GM12878 (cell line): ENCODE measurements at regions of chr7 and their contacts with region 1.

Region 1: GRCh38 chr7:109179601-109180000 is 609.9 kb downstream of the DNAJB9 start:
- DNase-seq: no peak
- ATAC-seq: no peak
- H3K4me3 ChIP-seq: no peak overlapping the region
- H3K27ac ChIP-seq: no peak overlapping the region
- H3K4me1 ChIP-seq: no peaks in the 10 kb centered on the region
- H3K27me3 ChIP-seq: no peaks in the 10 kb centered on the region
- CTCF ChIP-seq: no peak
- EP300 ChIP-seq: no peak
- POLR2A ChIP-seq: no peak
- RAD21 ChIP-seq: no peak

Region 2: DNA sequence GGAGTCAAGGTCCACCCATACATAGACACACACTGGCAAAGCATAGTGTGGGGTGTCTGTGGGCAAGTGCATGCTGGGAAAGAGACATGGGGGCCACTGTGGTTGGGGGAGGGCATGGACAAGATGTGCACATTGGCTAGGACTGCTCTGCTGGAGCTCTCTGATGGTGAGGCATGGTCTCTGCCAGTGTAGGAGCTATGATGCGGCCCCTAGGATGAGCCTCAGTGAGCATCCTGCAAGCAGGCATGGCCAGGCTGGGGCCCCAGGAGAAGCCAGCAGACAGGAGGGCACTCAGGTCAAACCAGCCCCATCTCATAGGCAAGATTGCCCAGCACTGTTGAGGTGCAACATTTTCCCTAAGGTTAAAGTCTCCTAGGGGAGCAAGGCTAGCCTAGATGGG is 120.5 kb before region 1 on chr7:
- CTCF ChIA-PET with region 1: no interaction called
- POLR2A ChIA-PET with region 1: no interaction called
- RAD21 ChIA-PET with region 1: no interaction called
- SMC1A ChIA-PET with region 1: no interaction called
- in situ Hi-C with region 1: no loop called
- intact Hi-C with region 1: no loop called
- DNase-seq: no peak
- ATAC-seq: no peak
- H3K4me3 ChIP-seq: no peak overlapping the region
- H3K27ac ChIP-seq: no peak overlapping the region
- H3K4me1 ChIP-seq: no peaks in the 10 kb centered on the region
- H3K27me3 ChIP-seq: no peaks in the 10 kb centered on the region
- CTCF ChIP-seq: no peak
- EP300 ChIP-seq: no peak
- POLR2A ChIP-seq: no peak
- RAD21 ChIP-seq: no peak

Region 3: GRCh38 chr7:109092268-109092667 is 87.3 kb before region 1 on chr7:
- CTCF ChIA-PET with region 1: no interaction called
- POLR2A ChIA-PET with region 1: no interaction called
- RAD21 ChIA-PET with region 1: no interaction called
- SMC1A ChIA-PET with region 1: no interaction called
- in situ Hi-C with region 1: no loop called
- intact Hi-C with region 1: loop called (anchors 10 kb)
- DNase-seq: no peak
- ATAC-seq: no peak
- H3K4me3 ChIP-seq: no peak overlapping the region
- H3K27ac ChIP-seq: no peak overlapping the region
- H3K4me1 ChIP-seq: no peaks in the 10 kb centered on the region
- H3K27me3 ChIP-seq: no peaks in the 10 kb centered on the region
- CTCF ChIP-seq: no peak; a peak in 1 of 6 replicates
- EP300 ChIP-seq: no peak
- POLR2A ChIP-seq: no peak
- RAD21 ChIP-seq: no peak